HepG2 (cell line): ENCODE measurements at regions of chr17 and their contacts with region 1.

Region 1: DNA sequence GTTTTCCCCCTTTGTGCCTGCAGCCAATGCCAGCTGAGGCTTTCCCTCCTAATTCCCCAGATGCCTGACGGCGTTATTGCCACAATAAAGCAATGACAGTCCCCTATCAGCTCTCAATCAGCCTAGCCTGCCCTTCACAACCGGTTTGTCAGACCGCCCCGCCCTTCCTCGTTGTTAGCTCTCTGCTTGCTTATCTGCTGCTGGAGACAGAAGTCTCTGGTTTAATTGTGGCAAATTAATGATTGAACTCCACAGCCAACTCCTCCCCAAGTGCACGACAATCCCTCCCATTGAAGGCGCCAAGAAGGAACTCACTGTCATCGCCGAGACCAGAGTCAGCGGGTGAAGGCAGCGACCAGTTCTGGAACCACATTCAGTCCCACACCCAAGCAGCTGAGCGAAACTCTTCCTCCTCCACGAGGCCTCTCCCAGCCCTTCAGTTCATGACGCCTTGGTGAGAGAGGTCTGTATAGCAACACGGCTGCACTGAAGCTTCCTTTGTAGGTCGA is 474.4 kb downstream of the SLC39A11 start:
- DNase-seq: peak; percentile 92
- ATAC-seq: peak; percentile 70
- H3K4me3 ChIP-seq: peak overlapping the region; percentile 33 to 64 (median 40); a peak in 5 of 6 replicates
- H3K27ac ChIP-seq: no peak overlapping the region
- H3K4me1 ChIP-seq: peaks cover 71% of the 10 kb centered on the region
- H3K27me3 ChIP-seq: no peaks in the 10 kb centered on the region
- CTCF ChIP-seq: no peak
- EP300 ChIP-seq: peak in 1 of 2 experiments; percentile 65; a peak in 2 of 4 replicates
- POLR2A ChIP-seq: peak in 1 of 2 experiments; percentile 20; a peak in 1 of 4 replicates
- RAD21 ChIP-seq: no peak

Region 2: DNA sequence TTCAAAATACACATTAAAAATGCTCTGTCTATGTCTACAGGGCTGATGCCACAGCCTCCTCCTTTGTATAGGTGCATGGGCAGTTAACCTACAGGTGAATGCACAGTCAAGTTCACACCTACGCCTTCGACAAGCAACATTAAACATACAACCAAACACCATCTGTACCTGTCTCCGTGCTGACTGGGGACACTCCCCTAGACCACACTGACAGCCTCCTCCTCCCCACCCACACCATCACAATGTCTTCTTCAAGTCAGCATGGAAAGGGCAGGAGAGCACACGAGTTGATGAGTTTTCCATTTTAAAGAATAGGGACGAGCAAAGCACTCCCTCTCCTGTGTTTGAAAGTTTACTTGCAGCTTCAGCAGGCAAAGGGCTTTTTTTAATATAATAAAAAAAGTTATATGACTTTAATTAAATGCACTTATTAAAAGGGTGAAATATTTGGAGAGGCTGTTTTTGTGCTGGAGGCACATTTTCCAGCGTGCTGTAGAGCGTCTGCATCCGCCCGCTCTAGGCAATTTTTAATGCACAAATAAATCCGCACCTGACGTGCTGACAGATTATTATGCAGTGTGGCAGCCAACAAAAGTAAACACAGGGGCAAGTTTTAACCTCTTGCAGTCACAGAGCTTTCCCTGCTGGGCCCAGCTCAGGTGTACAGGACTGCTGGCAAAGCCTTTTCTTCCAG is 129.4 kb before region 1 on chr17:
- CTCF ChIA-PET with region 1: no interaction called
- POLR2A ChIA-PET with region 1: no interaction called
- in situ Hi-C with region 1: no loop called
- intact Hi-C with region 1: no loop called
- DNase-seq: no peak
- ATAC-seq: no peak; the same call in 2 of the 3 replicates
- H3K4me3 ChIP-seq: 0 out of 6 replicates have a peak overlapping the region, but pooled peaks of 1 of the 3 experiments have one; percentile 4
- H3K27ac ChIP-seq: no peak overlapping the region
- H3K4me1 ChIP-seq: peaks cover 59% of the 10 kb centered on the region
- H3K27me3 ChIP-seq: no peaks in the 10 kb centered on the region
- CTCF ChIP-seq: no peak
- EP300 ChIP-seq: no peak
- POLR2A ChIP-seq: no peak
- RAD21 ChIP-seq: no peak

Region 3: DNA sequence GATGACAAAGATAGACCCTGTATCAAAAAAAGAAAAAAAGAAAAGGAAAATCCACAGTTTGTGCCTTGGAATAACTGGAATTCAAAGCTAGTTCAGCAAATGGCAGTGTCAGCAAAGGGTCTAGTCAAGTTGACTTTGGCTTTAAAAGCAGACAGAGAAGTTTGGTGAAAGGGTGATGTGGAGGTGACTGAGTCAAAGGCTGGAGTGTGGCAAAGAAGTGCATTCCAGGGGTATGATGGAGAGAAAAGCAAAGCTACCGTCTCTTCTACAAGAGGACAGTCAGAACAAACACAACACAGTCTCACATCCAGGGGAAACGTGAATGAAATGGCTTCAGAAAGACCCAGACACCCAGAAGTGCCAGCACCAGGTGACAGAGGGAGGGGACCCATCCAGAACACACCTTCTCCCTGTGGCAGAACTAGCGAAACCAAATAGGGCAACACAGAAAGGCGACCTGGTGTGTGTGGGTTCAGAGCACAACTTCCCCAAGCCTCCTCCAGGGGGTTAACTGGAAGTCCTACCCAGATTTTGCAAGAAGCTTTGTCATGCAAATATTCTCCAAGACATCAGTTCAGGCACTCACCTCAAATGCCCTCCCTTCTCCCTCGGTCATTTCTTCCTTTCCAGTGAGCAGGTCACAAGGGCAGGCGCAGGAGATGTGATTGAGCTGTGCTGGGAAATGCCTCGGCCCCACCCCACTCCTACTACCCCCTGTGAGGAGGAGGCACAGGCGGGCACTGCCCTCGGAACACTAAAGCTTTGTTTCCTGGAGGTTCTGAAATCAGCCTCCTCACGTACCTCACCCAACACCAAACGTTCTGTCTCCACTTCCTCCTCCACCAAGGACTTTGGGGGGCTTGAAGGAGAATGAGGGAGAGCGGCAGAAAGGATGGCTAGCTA is 15.3 kb before region 1 on chr17:
- CTCF ChIA-PET with region 1: no interaction called
- POLR2A ChIA-PET with region 1: interaction called, 48 read pairs
- in situ Hi-C with region 1: no loop called
- intact Hi-C with region 1: loop called (anchors 1 kb)
- DNase-seq: no peak
- ATAC-seq: peak; percentile 70
- H3K4me3 ChIP-seq: peak overlapping the region; percentile 9 to 52 (median 11)
- H3K27ac ChIP-seq: no peak overlapping the region
- H3K4me1 ChIP-seq: peaks cover 54% of the 10 kb centered on the region
- H3K27me3 ChIP-seq: no peaks in the 10 kb centered on the region
- CTCF ChIP-seq: no peak
- EP300 ChIP-seq: no peak
- POLR2A ChIP-seq: no peak
- RAD21 ChIP-seq: no peak

Region 4: GRCh38 chr17:72640415-72641165 is 22.5 kb after region 1 on chr17:
- CTCF ChIA-PET with region 1: no interaction called
- POLR2A ChIA-PET with region 1: no interaction called
- in situ Hi-C with region 1: no loop called
- intact Hi-C with region 1: no loop called
- DNase-seq: no peak
- ATAC-seq: no peak
- H3K4me3 ChIP-seq: no peak overlapping the region
- H3K27ac ChIP-seq: no peak overlapping the region
- H3K4me1 ChIP-seq: peaks cover 28% of the 10 kb centered on the region
- H3K27me3 ChIP-seq: no peaks in the 10 kb centered on the region
- CTCF ChIP-seq: no peak
- EP300 ChIP-seq: no peak
- POLR2A ChIP-seq: no peak
- RAD21 ChIP-seq: no peak

Region 5: DNA sequence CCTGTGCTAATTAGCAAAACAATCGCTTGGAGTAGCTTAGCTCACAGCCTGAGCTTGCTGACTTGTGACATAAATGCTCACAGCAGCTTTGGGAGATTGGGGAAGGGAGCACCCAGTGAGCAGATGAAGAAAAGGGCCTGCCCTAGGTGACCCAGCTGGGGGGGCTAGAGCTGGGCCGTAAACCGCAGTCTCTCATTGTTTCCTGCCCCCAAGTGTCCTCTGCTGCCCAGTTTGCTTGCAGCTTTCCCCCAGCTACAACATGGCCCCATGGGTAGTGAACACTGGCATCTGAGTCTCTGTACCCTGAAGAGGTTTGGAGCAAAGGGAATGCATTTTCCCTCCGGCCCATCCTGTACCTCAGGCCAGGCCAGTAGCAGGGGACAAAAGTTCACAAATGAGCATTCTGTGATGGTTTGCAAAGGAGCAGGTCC is 125.0 kb after region 1 on chr17:
- CTCF ChIA-PET with region 1: no interaction called
- POLR2A ChIA-PET with region 1: no interaction called
- in situ Hi-C with region 1: no loop called
- intact Hi-C with region 1: no loop called
- DNase-seq: no peak
- ATAC-seq: peak; percentile 51
- H3K4me3 ChIP-seq: no peak overlapping the region
- H3K27ac ChIP-seq: no peak overlapping the region
- H3K4me1 ChIP-seq: peaks cover 8% of the 10 kb centered on the region; the same call in 1 of the 2 replicates
- H3K27me3 ChIP-seq: no peaks in the 10 kb centered on the region
- CTCF ChIP-seq: no peak
- EP300 ChIP-seq: no peak
- POLR2A ChIP-seq: no peak
- RAD21 ChIP-seq: no peak